ENCODE measurements at regions of chr13 and their contacts with region 1.

Region 1: GRCh38 chr13:48773531-48774275 is 120.0 kb downstream of the CYSLTR2 start:
- DNase-seq: no peak
- ATAC-seq: no peak
- H3K4me3 ChIP-seq: no peak overlapping the region
- H3K27ac ChIP-seq: no peak overlapping the region
- H3K4me1 ChIP-seq: peaks cover 3% of the 10 kb centered on the region
- H3K27me3 ChIP-seq: no peaks in the 10 kb centered on the region
- CTCF ChIP-seq: no peak
- POLR2A ChIP-seq: no peak

Region 2: GRCh38 chr13:48594096-48594815 is 179.4 kb before region 1 on chr13:
- intact Hi-C with region 1: loop called (anchors 5 kb)
- DNase-seq: no peak
- ATAC-seq: no peak
- H3K4me3 ChIP-seq: no peak overlapping the region
- H3K27ac ChIP-seq: no peak overlapping the region
- H3K4me1 ChIP-seq: peaks cover 38% of the 10 kb centered on the region
- H3K27me3 ChIP-seq: no peaks in the 10 kb centered on the region
- CTCF ChIP-seq: no peak
- POLR2A ChIP-seq: no peak

Region 3: GRCh38 chr13:48849515-48849914 is 75.8 kb after region 1 on chr13:
- intact Hi-C with region 1: no loop called
- DNase-seq: no peak
- ATAC-seq: no peak
- H3K4me3 ChIP-seq: no peak overlapping the region
- H3K27ac ChIP-seq: no peak overlapping the region
- H3K4me1 ChIP-seq: no peaks in the 10 kb centered on the region
- H3K27me3 ChIP-seq: no peaks in the 10 kb centered on the region
- CTCF ChIP-seq: no peak
- POLR2A ChIP-seq: no peak